ENCODE measurements at regions of chr5 and their contacts with region 1.

Region 1: DNA sequence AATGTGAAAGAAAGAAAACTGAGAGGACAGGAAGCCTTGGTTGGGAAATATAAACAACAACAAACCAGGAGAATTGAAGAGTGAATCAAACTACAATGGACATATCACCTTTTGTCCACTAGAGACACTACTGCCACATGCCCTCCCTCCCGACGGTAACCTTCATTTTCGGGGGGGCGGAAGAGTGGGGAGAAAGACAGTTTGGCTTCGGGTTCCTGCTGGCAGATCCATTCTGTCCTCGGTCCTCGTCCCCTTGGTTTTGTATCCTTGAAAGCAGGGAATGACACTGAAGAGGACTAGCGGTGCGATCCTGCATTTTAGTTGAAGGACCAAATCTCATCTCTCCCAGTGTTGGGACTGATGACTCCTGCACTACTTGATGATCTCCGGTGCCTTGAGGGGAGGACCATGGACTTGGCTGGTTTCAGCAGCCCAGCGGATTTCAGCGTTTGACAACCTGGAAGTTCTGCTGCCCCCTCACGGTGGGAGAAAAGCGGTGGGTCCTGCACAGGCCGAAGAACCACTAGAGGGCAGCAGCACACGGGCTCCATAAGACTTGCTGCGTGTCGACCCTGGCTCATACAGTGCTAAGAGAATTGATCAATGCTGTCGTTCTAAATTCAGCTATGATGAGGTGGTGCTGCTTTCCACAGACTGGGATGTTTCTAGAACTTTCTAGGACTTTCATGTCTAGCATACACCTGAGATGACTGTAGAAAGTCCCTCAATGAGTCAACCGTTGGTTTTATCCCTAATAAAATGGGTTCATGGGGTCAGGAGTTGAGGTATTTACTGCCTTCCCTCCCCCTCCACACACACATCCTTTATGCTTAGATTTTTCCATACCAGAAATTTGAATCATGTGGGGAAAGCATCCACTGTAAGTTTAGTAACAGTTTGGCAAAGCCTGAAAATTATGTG is 15.1 kb upstream of the ZNF131 start:
- DNase-seq: peak; percentile 93
- H3K4me3 ChIP-seq: peak overlapping the region; percentile 65
- H3K27ac ChIP-seq: peak overlapping the region; percentile 20
- H3K4me1 ChIP-seq: peaks cover 4% of the 10 kb centered on the region
- CTCF ChIP-seq: peak; percentile 100

Region 2: DNA sequence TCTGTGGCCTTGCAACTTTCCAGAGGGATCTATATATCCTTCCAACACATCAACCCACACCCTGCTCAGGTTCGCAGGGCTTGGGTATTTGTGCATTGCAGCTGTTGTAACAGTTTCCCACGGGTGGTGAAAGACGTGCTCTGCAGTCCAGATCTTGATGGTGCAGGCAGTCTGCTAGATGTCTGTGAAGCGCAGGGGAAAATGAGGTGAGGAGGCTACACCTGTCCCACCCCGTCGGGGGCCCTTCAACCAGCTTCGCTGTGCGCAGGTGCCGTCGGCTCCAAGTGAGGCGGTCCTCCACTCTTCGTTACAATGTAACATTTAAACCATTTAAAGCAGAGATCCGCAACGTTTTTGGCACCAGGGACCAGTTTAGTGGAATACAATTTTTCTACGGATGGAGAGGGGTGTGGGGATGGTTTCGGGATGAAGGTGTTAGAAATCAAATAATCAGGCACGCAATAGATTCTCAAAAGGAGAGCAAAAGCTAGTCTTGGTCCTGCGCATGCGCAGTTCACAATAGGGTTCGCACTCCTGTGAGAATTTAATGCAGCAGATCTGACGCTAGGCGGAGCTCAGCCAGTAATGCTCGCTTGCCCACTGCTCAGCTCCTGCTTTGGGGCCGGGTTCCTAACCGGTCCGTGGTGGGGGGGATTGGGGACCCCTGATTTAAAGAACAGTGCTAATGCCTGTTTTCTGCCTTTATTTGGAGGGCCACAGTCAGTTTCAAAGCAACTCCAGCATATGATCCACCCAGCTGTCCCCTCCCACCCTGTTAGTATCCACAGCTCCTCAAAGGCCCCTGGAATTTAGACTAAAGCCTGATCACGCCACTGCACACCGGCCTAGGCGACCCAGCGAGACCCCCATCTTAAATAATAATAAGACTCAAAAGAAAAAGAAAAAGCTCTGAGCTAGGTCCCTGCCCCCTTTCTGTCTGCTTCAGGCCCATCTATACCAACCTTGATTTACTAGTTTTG is 196.8 kb before region 1 on chr5:
- CTCF ChIA-PET with region 1: no interaction called
- POLR2A ChIA-PET with region 1: interaction called, 3 read pairs
- intact Hi-C with region 1: loop called (anchors 2 kb)
- DNase-seq: peak; percentile 85
- H3K4me3 ChIP-seq: peak overlapping the region; percentile 20
- H3K27ac ChIP-seq: no peak overlapping the region
- H3K4me1 ChIP-seq: no peaks in the 10 kb centered on the region
- CTCF ChIP-seq: peak; percentile 76

Region 3: GRCh38 chr5:43066799-43067741 is 38.6 kb before region 1 on chr5:
- CTCF ChIA-PET with region 1: no interaction called
- POLR2A ChIA-PET with region 1: no interaction called
- intact Hi-C with region 1: loop called (anchors 2 kb)
- DNase-seq: peak; percentile 93
- H3K4me3 ChIP-seq: peak overlapping the region; percentile 85
- H3K27ac ChIP-seq: peak overlapping the region; percentile 92
- H3K4me1 ChIP-seq: peaks cover 29% of the 10 kb centered on the region
- CTCF ChIP-seq: no peak

Region 4: GRCh38 chr5:43073597-43074546 is 31.8 kb before region 1 on chr5:
- CTCF ChIA-PET with region 1: no interaction called
- POLR2A ChIA-PET with region 1: no interaction called
- intact Hi-C with region 1: loop called (anchors 1 kb)
- DNase-seq: peak; percentile 59
- H3K4me3 ChIP-seq: no peak overlapping the region
- H3K27ac ChIP-seq: no peak overlapping the region
- H3K4me1 ChIP-seq: peaks cover 20% of the 10 kb centered on the region
- CTCF ChIP-seq: peak; percentile 85

Region 5: GRCh38 chr5:43389679-43390329 is 284.2 kb after region 1 on chr5:
- CTCF ChIA-PET with region 1: no interaction called
- POLR2A ChIA-PET with region 1: no interaction called
- intact Hi-C with region 1: loop called (anchors 1 kb)
- DNase-seq: peak; percentile 74
- H3K4me3 ChIP-seq: no peak overlapping the region
- H3K27ac ChIP-seq: no peak overlapping the region
- H3K4me1 ChIP-seq: no peaks in the 10 kb centered on the region
- CTCF ChIP-seq: peak; percentile 97